ENCODE measurements at regions of chr1 and their contacts with region 1.

Region 1: GRCh38 chr1:205227584-205228006 is at the start of gene TMCC2:
- DNase-seq: peak; percentile 89
- H3K4me3 Mint-ChIP-seq: peak within 1 kb of the TSS; percentile 96
- H3K27ac Mint-ChIP-seq: peak within 1 kb of the TSS; percentile 93
- H3K4me1 Mint-ChIP-seq: peaks cover 25% of the 10 kb centered on the region
- H3K27me3 Mint-ChIP-seq: peaks cover 16% of the 10 kb centered on the region
- total RNA-seq, gene TMCC2: 42.5 to 44.8 TPM

Region 2: GRCh38 chr1:205091043-205091740 is 136.4 kb before region 1 on chr1:
- CTCF ChIA-PET with region 1: no interaction called
- intact Hi-C with region 1: no loop called
- DNase-seq: no peak
- H3K4me3 Mint-ChIP-seq: no peak overlapping the region
- H3K27ac Mint-ChIP-seq: no peak overlapping the region
- H3K4me1 Mint-ChIP-seq: no peaks in the 10 kb centered on the region
- H3K27me3 Mint-ChIP-seq: no peaks in the 10 kb centered on the region

Region 3: GRCh38 chr1:205172729-205173366 is 54.7 kb before region 1 on chr1:
- CTCF ChIA-PET with region 1: interaction called, 4 read pairs
- intact Hi-C with region 1: loop called (anchors 1 kb)
- DNase-seq: no peak
- H3K4me3 Mint-ChIP-seq: no peak overlapping the region
- H3K27ac Mint-ChIP-seq: peak overlapping the region; percentile 74
- H3K4me1 Mint-ChIP-seq: peaks cover 31% of the 10 kb centered on the region
- H3K27me3 Mint-ChIP-seq: no peaks in the 10 kb centered on the region

Region 4: GRCh38 chr1:205211169-205211838 is 16.3 kb before region 1 on chr1 and contains the start of gene DSTYK:
- CTCF ChIA-PET with region 1: interaction called, 12 read pairs
- intact Hi-C with region 1: loop called (anchors 1 kb)
- DNase-seq: peak; percentile 97
- H3K4me3 Mint-ChIP-seq: peak within 1 kb of the TSS; percentile 93
- H3K27ac Mint-ChIP-seq: peak within 1 kb of the TSS; percentile 95
- H3K4me1 Mint-ChIP-seq: peaks cover 57% of the 10 kb centered on the region
- H3K27me3 Mint-ChIP-seq: no peaks in the 10 kb centered on the region
- total RNA-seq, gene DSTYK: 10.9 to 11.5 TPM

Region 5: GRCh38 chr1:205248793-205249601 is 21.4 kb after region 1 on chr1:
- CTCF ChIA-PET with region 1: interaction called, 277 read pairs
- intact Hi-C with region 1: no loop called
- DNase-seq: no peak
- H3K4me3 Mint-ChIP-seq: no peak overlapping the region
- H3K27ac Mint-ChIP-seq: no peak overlapping the region
- H3K4me1 Mint-ChIP-seq: peaks cover 3% of the 10 kb centered on the region
- H3K27me3 Mint-ChIP-seq: no peaks in the 10 kb centered on the region

Region 6: GRCh38 chr1:205273551-205273982 is 46.0 kb after region 1 on chr1:
- CTCF ChIA-PET with region 1: interaction called, 26 read pairs
- intact Hi-C with region 1: no loop called
- DNase-seq: peak; percentile 94
- H3K4me3 Mint-ChIP-seq: no peak overlapping the region
- H3K27ac Mint-ChIP-seq: peak overlapping the region; percentile 27
- H3K4me1 Mint-ChIP-seq: peaks cover 51% of the 10 kb centered on the region
- H3K27me3 Mint-ChIP-seq: no peaks in the 10 kb centered on the region

Region 7: DNA sequence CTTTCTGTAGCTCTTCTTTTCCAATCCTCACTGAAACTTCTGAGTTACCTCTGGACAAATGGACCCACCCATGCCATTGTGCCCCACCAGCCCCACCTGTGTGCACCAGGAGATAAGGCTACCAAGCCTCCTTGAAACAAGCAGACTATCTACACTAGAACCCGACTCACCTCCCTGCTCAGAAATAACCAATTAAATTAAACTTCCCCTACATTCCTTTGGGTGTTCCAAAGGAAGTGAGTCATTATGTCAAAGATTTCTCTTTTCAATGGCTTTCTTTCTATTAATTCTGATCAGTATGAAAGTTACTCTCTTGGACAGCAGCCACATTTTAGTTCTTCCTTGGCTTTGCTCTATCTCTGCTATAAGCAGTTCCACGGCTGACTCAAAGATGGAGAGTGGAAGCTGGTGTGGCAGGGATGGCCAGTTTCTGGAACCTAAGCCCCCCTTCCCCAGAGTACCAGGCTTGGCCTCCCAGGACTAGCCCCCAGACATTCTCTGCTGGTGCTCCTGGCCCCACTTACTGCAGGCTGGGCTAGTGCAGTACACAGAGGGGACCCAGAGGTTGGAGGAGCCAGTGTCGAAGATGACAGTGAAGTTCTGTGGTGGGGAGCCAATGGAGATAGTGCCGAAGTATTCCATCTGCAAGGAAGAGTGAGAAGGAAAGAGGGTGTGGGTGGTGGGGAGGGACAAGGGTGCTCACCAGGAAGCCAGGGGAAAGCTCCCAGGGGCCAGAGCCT is 794.2 kb after region 1 on chr1:
- CTCF ChIA-PET with region 1: no interaction called
- intact Hi-C with region 1: no loop called
- DNase-seq: no peak
- H3K4me3 Mint-ChIP-seq: no peak overlapping the region
- H3K27ac Mint-ChIP-seq: no peak overlapping the region
- H3K4me1 Mint-ChIP-seq: peaks cover 6% of the 10 kb centered on the region
- H3K27me3 Mint-ChIP-seq: no peaks in the 10 kb centered on the region